CD8-positive, alpha-beta T cell (primary cell): ENCODE measurements at regions of chr6 and their contacts with region 1.

Region 1: DNA sequence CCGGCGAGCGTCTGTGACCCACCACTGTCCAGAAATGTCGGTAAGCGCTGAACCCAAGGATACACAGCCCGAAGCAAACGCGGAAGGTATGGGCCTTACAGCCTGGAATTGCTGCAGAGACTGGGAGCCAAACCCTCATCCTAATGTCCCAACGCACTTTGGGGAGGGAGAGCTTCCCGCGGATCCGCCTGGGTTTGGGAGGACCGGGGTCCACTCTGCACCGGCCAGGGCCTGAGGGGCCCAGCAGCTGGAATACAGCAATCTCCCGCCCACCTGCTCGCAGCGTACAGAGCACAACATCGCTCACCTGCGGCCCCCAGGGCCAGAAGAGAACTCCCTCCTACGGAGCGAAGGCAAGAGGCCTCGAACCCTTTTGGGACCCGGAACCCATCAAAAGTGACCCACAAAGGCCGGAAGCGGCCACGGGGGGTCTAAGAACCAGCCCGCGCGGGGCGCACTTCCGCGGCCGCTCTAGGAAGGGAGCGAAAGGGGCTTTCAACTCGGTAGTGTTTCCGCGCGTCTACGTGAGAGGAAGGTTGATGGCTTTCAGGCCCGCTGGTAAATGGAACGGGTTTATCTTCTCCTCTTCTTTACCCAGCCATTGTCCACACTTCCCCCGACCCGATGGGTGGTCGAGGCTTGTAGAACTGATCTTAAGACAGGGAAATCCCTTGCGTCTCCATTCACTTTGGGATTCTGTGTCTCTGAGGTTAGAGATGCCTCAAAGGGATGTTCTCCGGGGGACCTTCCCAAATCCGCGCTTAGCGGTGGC is at the start of gene ZSCAN12:
- DNase-seq: peak; percentile 76 to 92 (median 86)
- ATAC-seq: peak; percentile 96
- H3K4me3 ChIP-seq: peak within 1 kb of the TSS; percentile 87 to 96
- H3K4me3 Mint-ChIP-seq: peak within 1 kb of the TSS; percentile 93
- H3K27ac ChIP-seq: peak within 1 kb of the TSS; percentile 73 to 85
- H3K27ac Mint-ChIP-seq: peak within 1 kb of the TSS; percentile 97
- H3K4me1 ChIP-seq: peaks cover 32% of the 10 kb centered on the region
- H3K4me1 Mint-ChIP-seq: peaks cover 47% of the 10 kb centered on the region
- H3K27me3 ChIP-seq: no peaks in the 10 kb centered on the region
- H3K27me3 Mint-ChIP-seq: peaks cover 34% of the 10 kb centered on the region
- CTCF ChIP-seq: no peak
- total RNA-seq, gene ZSCAN12: 2.8 to 3.0 TPM

Region 2: GRCh38 chr6:28124102-28124970 is 275.2 kb before region 1 on chr6 and contains the start of gene ZSCAN16:
- CTCF ChIA-PET with region 1: no interaction called
- POLR2A ChIA-PET with region 1: no interaction called
- intact Hi-C with region 1: loop called in 1 of 2 experiments (anchors 1 kb)
- DNase-seq: peak; percentile 59 to 86 (median 76)
- ATAC-seq: peak; percentile 72
- H3K4me3 ChIP-seq: peak within 1 kb of the TSS; percentile 79 to 86
- H3K4me3 Mint-ChIP-seq: peak within 1 kb of the TSS; percentile 95
- H3K27ac ChIP-seq: peak within 1 kb of the TSS; percentile 76 to 89
- H3K27ac Mint-ChIP-seq: peak within 1 kb of the TSS; percentile 97
- H3K4me1 ChIP-seq: peaks cover 11% of the 10 kb centered on the region
- H3K4me1 Mint-ChIP-seq: peaks cover 42% of the 10 kb centered on the region
- H3K27me3 ChIP-seq: no peaks in the 10 kb centered on the region
- H3K27me3 Mint-ChIP-seq: no peaks in the 10 kb centered on the region
- CTCF ChIP-seq: no peak
- total RNA-seq, gene ZSCAN16: 5.2 to 6.0 TPM

Region 3: GRCh38 chr6:28161410-28162079 is 238.0 kb before region 1 on chr6:
- CTCF ChIA-PET with region 1: no interaction called
- POLR2A ChIA-PET with region 1: no interaction called
- intact Hi-C with region 1: no loop called
- DNase-seq: peak; percentile 70 to 90 (median 83)
- ATAC-seq: peak; percentile 98
- H3K4me3 ChIP-seq: peak overlapping the region; percentile 45 to 49
- H3K4me3 Mint-ChIP-seq: peak overlapping the region; percentile 76
- H3K27ac ChIP-seq: peak overlapping the region in 1 of 2 experiments; percentile 4
- H3K27ac Mint-ChIP-seq: no peak overlapping the region
- H3K4me1 ChIP-seq: peaks cover 12% of the 10 kb centered on the region
- H3K4me1 Mint-ChIP-seq: peaks cover 15% of the 10 kb centered on the region
- H3K27me3 ChIP-seq: no peaks in the 10 kb centered on the region
- H3K27me3 Mint-ChIP-seq: peaks cover 4% of the 10 kb centered on the region
- CTCF ChIP-seq: no peak

Region 4: DNA sequence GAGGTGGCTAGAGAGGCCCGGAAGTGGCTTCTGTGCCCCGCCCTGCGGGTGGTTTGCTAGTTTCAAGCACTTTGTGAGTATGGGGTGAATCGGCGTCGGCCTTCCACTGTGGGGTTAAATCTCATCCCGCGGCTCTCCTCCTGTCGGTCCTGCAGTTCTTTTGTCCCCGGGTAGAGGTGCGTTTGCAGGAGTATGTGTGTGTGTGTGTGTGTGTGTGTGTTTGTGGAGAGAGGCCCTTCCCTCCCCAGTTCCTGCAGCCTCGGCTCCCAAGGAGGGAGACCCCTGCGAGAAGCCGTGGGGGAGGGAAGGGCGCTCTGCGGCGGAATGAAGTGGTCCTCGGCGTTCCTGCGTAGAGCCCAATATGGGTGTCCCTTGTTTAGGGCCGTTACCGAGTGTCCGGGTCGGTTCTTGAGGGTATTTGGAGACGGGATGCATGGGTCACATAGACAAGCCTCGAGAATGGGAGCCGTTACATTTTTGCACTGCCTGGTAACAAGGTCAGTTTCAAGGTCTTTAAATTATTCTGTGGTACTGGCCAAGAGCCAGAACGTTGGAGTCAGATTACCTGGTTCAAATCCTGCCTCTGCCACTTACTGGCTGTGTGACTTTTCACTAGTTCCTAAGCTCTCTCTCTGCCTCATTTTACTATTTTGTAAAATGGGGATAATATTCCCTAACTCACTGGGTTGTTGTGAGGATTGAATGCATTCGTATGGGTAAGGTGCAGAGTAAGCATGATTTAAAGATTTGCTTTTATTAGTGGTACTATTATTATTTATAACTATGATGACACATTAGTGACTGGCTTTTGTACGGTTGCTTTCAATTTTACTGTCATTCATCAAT is 49.4 kb before region 1 on chr6 and contains the start of gene ZKSCAN3:
- CTCF ChIA-PET with region 1: no interaction called
- POLR2A ChIA-PET with region 1: no interaction called
- intact Hi-C with region 1: loop called (anchors 1 kb)
- DNase-seq: peak; percentile 57 to 88 (median 82)
- ATAC-seq: peak; percentile 99
- H3K4me3 ChIP-seq: peak within 1 kb of the TSS; percentile 69 to 81
- H3K4me3 Mint-ChIP-seq: peak within 1 kb of the TSS; percentile 98
- H3K27ac ChIP-seq: peak within 1 kb of the TSS; percentile 54 to 55
- H3K27ac Mint-ChIP-seq: peak within 1 kb of the TSS; percentile 95
- H3K4me1 ChIP-seq: peaks cover 15% of the 10 kb centered on the region
- H3K4me1 Mint-ChIP-seq: peaks cover 36% of the 10 kb centered on the region
- H3K27me3 ChIP-seq: peaks cover 0 to 3% of the 10 kb centered on the region in 2 experiments
- H3K27me3 Mint-ChIP-seq: peaks cover 12% of the 10 kb centered on the region
- CTCF ChIP-seq: no peak
- total RNA-seq, gene ZKSCAN3: 0.61 to 0.68 TPM

Region 5: DNA sequence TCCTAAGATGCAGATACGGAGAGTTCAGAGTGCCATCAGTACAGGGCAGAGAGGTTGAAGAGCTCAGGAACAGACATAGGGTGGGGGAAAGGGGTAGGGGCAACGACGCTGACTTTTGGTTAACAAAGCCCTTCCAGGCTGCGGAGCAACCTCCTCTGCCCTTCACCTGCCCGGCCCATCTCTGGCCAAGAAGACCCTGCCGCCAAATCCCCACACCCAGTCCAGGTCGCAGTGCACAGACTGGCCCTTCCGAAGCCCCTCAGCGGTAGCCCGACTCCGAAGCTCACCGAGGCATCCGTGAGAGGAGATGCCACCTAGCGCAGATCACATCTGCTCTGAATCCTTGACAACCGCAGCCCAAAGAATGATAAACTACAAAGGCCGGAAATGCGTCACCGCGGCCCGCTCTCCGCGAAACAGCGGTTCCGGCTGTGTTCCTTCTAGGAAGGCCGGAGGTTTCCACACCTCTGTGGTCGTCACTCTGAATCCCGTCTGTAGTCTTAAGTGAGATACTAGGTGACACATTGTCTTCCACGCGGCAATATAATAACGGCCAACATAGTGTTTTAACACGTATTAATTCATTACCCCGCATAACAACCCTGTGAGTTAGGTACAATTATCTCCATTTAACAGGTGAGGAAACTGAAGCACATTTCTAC is 43.7 kb after region 1 on chr6 and contains the start of gene ZSCAN23:
- CTCF ChIA-PET with region 1: no interaction called
- POLR2A ChIA-PET with region 1: no interaction called
- intact Hi-C with region 1: loop called (anchors 1 kb)
- DNase-seq: peak; percentile 69 to 95 (median 85)
- ATAC-seq: peak; percentile 90
- H3K4me3 ChIP-seq: peak within 1 kb of the TSS; percentile 53 to 63
- H3K4me3 Mint-ChIP-seq: peak within 1 kb of the TSS; percentile 89
- H3K27ac ChIP-seq: peak within 1 kb of the TSS; percentile 52 to 54
- H3K27ac Mint-ChIP-seq: peak within 1 kb of the TSS; percentile 89
- H3K4me1 ChIP-seq: peaks cover 28% of the 10 kb centered on the region
- H3K4me1 Mint-ChIP-seq: peaks cover 31% of the 10 kb centered on the region
- H3K27me3 ChIP-seq: peaks cover 0 to 11% of the 10 kb centered on the region in 2 experiments
- H3K27me3 Mint-ChIP-seq: peaks cover 38% of the 10 kb centered on the region
- CTCF ChIP-seq: no peak
- total RNA-seq, gene ZSCAN23: not detected

Region 6: GRCh38 chr6:28586962-28587745 is 187.6 kb after region 1 on chr6:
- CTCF ChIA-PET with region 1: no interaction called
- POLR2A ChIA-PET with region 1: no interaction called
- intact Hi-C with region 1: loop called in 1 of 2 experiments (anchors 1 kb)
- DNase-seq: peak; percentile 11 to 78 (median 58)
- ATAC-seq: peak; percentile 77
- H3K4me3 ChIP-seq: peak overlapping the region; percentile 46 to 58
- H3K4me3 Mint-ChIP-seq: peak overlapping the region; percentile 82
- H3K27ac ChIP-seq: no peak overlapping the region
- H3K27ac Mint-ChIP-seq: no peak overlapping the region
- H3K4me1 ChIP-seq: peaks cover 13% of the 10 kb centered on the region
- H3K4me1 Mint-ChIP-seq: peaks cover 23% of the 10 kb centered on the region
- H3K27me3 ChIP-seq: peaks cover 28 to 36% of the 10 kb centered on the region in 2 experiments
- H3K27me3 Mint-ChIP-seq: peaks cover 77% of the 10 kb centered on the region
- CTCF ChIP-seq: no peak